Activated B cell treated with CpG ODN at 0.5 μM for 24 hours (primary cell): ENCODE measurements at regions of chr3 and their contacts with region 1.

Region 1: GRCh38 chr3:44529927-44530326 is 25.1 kb upstream of the ZKSCAN7 start:
- DNase-seq: no peak
- ATAC-seq: no peak
- H3K4me3 Mint-ChIP-seq: no peak overlapping the region
- H3K27ac Mint-ChIP-seq: no peak overlapping the region
- H3K4me1 Mint-ChIP-seq: no peaks in the 10 kb centered on the region
- H3K27me3 Mint-ChIP-seq: peaks cover 32% of the 10 kb centered on the region
- CTCF ChIP-seq: no peak

Region 2: GRCh38 chr3:44504566-44504965 is 25.4 kb before region 1 on chr3:
- CTCF ChIA-PET with region 1: no interaction called
- POLR2A ChIA-PET with region 1: no interaction called
- intact Hi-C with region 1: no loop called
- DNase-seq: no peak
- ATAC-seq: no peak
- H3K4me3 Mint-ChIP-seq: no peak overlapping the region
- H3K27ac Mint-ChIP-seq: no peak overlapping the region
- H3K4me1 Mint-ChIP-seq: peaks cover 26% of the 10 kb centered on the region
- H3K27me3 Mint-ChIP-seq: no peaks in the 10 kb centered on the region
- CTCF ChIP-seq: no peak

Region 3: GRCh38 chr3:44913868-44914468 is 384.0 kb after region 1 on chr3:
- CTCF ChIA-PET with region 1: interaction called, 63 read pairs
- POLR2A ChIA-PET with region 1: no interaction called
- intact Hi-C with region 1: loop called (anchors 1 kb)
- DNase-seq: peak; percentile 41
- ATAC-seq: peak; percentile 61
- H3K4me3 Mint-ChIP-seq: no peak overlapping the region
- H3K27ac Mint-ChIP-seq: no peak overlapping the region
- H3K4me1 Mint-ChIP-seq: no peaks in the 10 kb centered on the region
- H3K27me3 Mint-ChIP-seq: peaks cover 4% of the 10 kb centered on the region
- CTCF ChIP-seq: no peak

Region 4: GRCh38 chr3:44976002-44976815 is 446.3 kb after region 1 on chr3 and contains the starts of genes EXOSC7 and ZDHHC3:
- CTCF ChIA-PET with region 1: no interaction called
- POLR2A ChIA-PET with region 1: no interaction called
- intact Hi-C with region 1: loop called (anchors 5 kb)
- DNase-seq: peak; percentile 76
- ATAC-seq: peak; percentile 94
- H3K4me3 Mint-ChIP-seq: peak within 1 kb of the TSS; percentile 93
- H3K27ac Mint-ChIP-seq: peak within 1 kb of the TSS; percentile 88
- H3K4me1 Mint-ChIP-seq: peaks cover 49% of the 10 kb centered on the region
- H3K27me3 Mint-ChIP-seq: no peaks in the 10 kb centered on the region
- CTCF ChIP-seq: no peak
- total RNA-seq, gene EXOSC7: 42.5 and 44.0 TPM in 2 replicates
- total RNA-seq, gene ZDHHC3: 38.5 and 43.4 TPM in 2 replicates

Region 5: GRCh38 chr3:44992555-44993470 is 462.9 kb after region 1 on chr3:
- CTCF ChIA-PET with region 1: no interaction called
- POLR2A ChIA-PET with region 1: no interaction called
- intact Hi-C with region 1: loop called (anchors 1 kb)
- DNase-seq: no peak
- ATAC-seq: no peak
- H3K4me3 Mint-ChIP-seq: no peak overlapping the region
- H3K27ac Mint-ChIP-seq: no peak overlapping the region
- H3K4me1 Mint-ChIP-seq: peaks cover 6% of the 10 kb centered on the region
- H3K27me3 Mint-ChIP-seq: no peaks in the 10 kb centered on the region
- CTCF ChIP-seq: no peak

Region 6: GRCh38 chr3:45210308-45211041 is 680.5 kb after region 1 on chr3:
- CTCF ChIA-PET with region 1: no interaction called
- POLR2A ChIA-PET with region 1: no interaction called
- intact Hi-C with region 1: loop called (anchors 2 kb)
- DNase-seq: peak; percentile 29
- ATAC-seq: peak; percentile 71
- H3K4me3 Mint-ChIP-seq: no peak overlapping the region
- H3K27ac Mint-ChIP-seq: no peak overlapping the region
- H3K4me1 Mint-ChIP-seq: no peaks in the 10 kb centered on the region
- H3K27me3 Mint-ChIP-seq: peaks cover 13% of the 10 kb centered on the region
- CTCF ChIP-seq: no peak